IMR-90 (cell line): ENCODE measurements at regions of chr1 and their contacts with region 1.

Region 1: GRCh38 chr1:116284819-116285390 is 88.1 kb upstream of the ATP1A1 start:
- DNase-seq: no peak
- ATAC-seq: no peak
- H3K4me3 ChIP-seq: no peak overlapping the region
- H3K27ac ChIP-seq: no peak overlapping the region
- H3K4me1 ChIP-seq: no peaks in the 10 kb centered on the region
- H3K27me3 ChIP-seq: no peaks in the 10 kb centered on the region; the same call in 1 of the 2 replicates
- CTCF ChIP-seq: no peak
- POLR2A ChIP-seq: no peak
- RAD21 ChIP-seq: no peak

Region 2: GRCh38 chr1:116325922-116326321 is 41.0 kb after region 1 on chr1:
- CTCF ChIA-PET with region 1: no interaction called
- POLR2A ChIA-PET with region 1: no interaction called
- dilution Hi-C with region 1: no loop called
- in situ Hi-C with region 1: no loop called
- intact Hi-C with region 1: loop called (anchors 5 kb)
- DNase-seq: no peak
- ATAC-seq: no peak
- H3K4me3 ChIP-seq: no peak overlapping the region
- H3K27ac ChIP-seq: no peak overlapping the region
- H3K4me1 ChIP-seq: no peaks in the 10 kb centered on the region
- H3K27me3 ChIP-seq: peaks cover 7% of the 10 kb centered on the region
- CTCF ChIP-seq: no peak
- POLR2A ChIP-seq: no peak
- RAD21 ChIP-seq: no peak

Region 3: DNA sequence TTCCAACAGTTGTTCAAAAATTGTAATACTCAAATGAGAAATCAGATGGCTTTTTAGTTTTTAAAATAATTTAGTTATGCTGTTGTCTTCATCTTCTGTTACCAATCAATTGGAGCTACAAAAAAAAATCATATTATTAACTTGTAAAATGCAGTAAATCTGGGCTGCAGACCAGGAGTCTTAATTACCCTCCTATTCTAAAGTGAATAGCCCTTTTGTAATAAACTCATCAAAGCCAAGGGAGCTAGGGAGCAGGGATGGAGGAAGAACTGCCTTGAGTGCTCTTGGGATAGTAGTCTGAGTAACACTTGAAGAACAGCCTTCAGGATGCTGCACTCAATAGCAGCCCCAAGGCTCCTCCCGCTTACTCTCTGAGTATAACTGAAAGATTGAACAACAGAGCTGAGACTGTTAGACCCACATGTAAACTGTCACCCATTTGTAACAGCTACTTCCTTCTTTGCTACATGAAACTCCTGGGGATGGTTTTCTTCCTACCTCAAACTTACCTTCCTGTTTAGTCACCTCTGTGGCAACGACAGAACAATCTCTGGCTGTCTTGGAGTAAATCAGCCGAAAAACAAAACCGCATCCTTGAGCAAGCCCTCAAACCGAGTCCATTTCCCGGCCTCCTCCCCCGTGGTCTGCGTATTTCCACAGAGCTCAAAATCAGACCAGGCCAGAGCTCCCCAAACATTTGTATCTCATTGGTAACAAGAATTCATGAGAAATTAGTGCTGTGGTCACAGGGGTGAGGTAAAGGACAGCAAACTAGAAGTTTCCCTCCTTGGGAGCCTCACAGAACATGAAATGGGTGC is 230.0 kb after region 1 on chr1:
- CTCF ChIA-PET with region 1: no interaction called
- POLR2A ChIA-PET with region 1: no interaction called
- dilution Hi-C with region 1: no loop called
- in situ Hi-C with region 1: no loop called
- intact Hi-C with region 1: no loop called
- DNase-seq: no peak
- ATAC-seq: no peak; the same call in 1 of the 2 replicates
- H3K4me3 ChIP-seq: no peak overlapping the region
- H3K27ac ChIP-seq: no peak overlapping the region
- H3K4me1 ChIP-seq: no peaks in the 10 kb centered on the region
- H3K27me3 ChIP-seq: no peaks in the 10 kb centered on the region
- CTCF ChIP-seq: no peak
- POLR2A ChIP-seq: no peak
- RAD21 ChIP-seq: no peak